Caco-2 (cell line): ENCODE measurements at regions of chr14 and their contacts with region 1.

Region 1: DNA sequence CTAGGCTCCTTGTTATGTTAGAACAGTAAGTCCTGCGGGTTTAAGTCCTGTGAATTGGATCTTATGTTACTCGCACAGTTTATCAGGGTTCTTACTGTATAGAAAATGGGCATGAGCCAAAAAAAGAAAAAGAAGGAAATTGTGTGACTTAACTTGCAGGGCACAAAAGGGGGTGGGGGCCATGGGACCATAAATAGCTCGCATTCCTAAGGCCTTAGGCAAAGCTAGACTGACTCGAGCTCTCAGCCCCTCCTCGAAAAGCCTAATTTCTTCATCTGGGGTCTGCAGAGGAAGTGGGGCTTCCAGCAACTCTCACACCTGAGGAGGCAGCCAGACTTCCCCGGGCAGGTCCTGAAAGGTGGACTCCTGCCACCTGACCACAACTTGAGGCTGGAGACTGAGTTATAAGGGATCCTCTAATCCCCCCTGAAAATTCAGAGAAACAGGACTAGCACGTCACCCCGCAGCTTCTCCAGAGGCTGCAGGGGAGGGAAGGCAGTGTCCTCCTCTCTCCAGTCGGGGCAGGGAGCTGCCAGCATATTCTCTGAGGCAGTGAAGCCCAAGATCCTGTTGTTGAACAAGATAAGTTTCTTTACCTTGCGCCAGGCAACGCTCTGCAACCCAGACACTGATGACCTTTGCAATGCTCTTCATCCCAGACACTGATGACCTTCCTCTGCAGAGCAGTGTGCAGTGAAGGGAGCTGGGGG is 280.5 kb downstream of the PCNX1 start:
- DNase-seq: peak; percentile 72 to 82
- H3K4me3 ChIP-seq: no peak overlapping the region
- H3K4me3 Mint-ChIP-seq: peak overlapping the region; percentile 48
- H3K27ac Mint-ChIP-seq: peak overlapping the region; percentile 95
- H3K4me1 ChIP-seq: peaks cover 31% of the 10 kb centered on the region
- H3K4me1 Mint-ChIP-seq: peaks cover 22% of the 10 kb centered on the region
- H3K27me3 ChIP-seq: no peaks in the 10 kb centered on the region
- H3K27me3 Mint-ChIP-seq: no peaks in the 10 kb centered on the region
- CTCF ChIP-seq: no peak

Region 2: GRCh38 chr14:71175450-71175849 is 12.4 kb before region 1 on chr14:
- CTCF ChIA-PET with region 1: no interaction called
- POLR2A ChIA-PET with region 1: no interaction called
- intact Hi-C with region 1: loop called (anchors 1 kb)
- DNase-seq: peak; percentile 32 to 51
- H3K4me3 ChIP-seq: no peak overlapping the region
- H3K4me3 Mint-ChIP-seq: no peak overlapping the region
- H3K27ac Mint-ChIP-seq: no peak overlapping the region
- H3K4me1 ChIP-seq: no peaks in the 10 kb centered on the region
- H3K4me1 Mint-ChIP-seq: peaks cover 7% of the 10 kb centered on the region
- H3K27me3 ChIP-seq: no peaks in the 10 kb centered on the region
- H3K27me3 Mint-ChIP-seq: no peaks in the 10 kb centered on the region
- CTCF ChIP-seq: no peak

Region 3: DNA sequence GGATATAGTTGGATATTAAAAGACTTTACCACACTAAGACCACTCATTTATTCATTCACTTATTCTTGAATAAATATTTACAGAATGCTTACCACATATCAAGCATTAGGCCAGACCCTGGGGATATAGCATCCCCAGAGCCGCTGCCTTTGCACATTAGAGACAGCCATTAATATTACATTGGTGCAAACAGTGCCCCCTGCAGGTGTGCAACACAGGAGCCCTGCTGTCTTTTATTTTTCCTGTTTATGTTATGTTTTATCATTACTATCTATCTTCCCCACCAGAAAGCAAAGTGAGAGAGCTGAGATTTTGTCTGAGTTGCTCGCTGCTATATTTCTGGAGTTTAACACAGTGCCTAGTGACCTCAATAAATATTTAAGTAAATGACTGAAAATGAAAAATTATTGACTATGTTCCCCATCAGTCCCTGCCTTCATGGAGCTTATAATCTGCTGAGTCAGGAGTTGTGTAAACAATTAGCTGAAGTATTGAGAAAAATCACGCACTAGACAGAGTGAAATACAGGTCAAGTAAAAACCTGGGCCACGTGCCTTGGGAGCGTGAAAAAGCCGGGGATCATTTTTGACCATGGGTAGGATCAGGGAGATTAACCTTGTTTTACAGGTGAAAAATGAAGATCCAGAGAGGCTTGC is 21.0 kb after region 1 on chr14:
- CTCF ChIA-PET with region 1: no interaction called
- POLR2A ChIA-PET with region 1: interaction called, 3 read pairs
- intact Hi-C with region 1: loop called (anchors 2 kb)
- DNase-seq: no peak
- H3K4me3 ChIP-seq: no peak overlapping the region
- H3K4me3 Mint-ChIP-seq: no peak overlapping the region
- H3K27ac Mint-ChIP-seq: no peak overlapping the region
- H3K4me1 ChIP-seq: no peaks in the 10 kb centered on the region
- H3K4me1 Mint-ChIP-seq: peaks cover 8% of the 10 kb centered on the region
- H3K27me3 ChIP-seq: no peaks in the 10 kb centered on the region
- H3K27me3 Mint-ChIP-seq: no peaks in the 10 kb centered on the region
- CTCF ChIP-seq: peak in 1 of 2 experiments; percentile 15

Region 4: GRCh38 chr14:71380271-71380670 is 192.5 kb after region 1 on chr14:
- CTCF ChIA-PET with region 1: no interaction called
- POLR2A ChIA-PET with region 1: interaction called, 13 read pairs
- intact Hi-C with region 1: no loop called
- DNase-seq: peak; percentile 36 to 41
- H3K4me3 ChIP-seq: no peak overlapping the region
- H3K4me3 Mint-ChIP-seq: no peak overlapping the region
- H3K27ac Mint-ChIP-seq: peak overlapping the region; percentile 10
- H3K4me1 ChIP-seq: peaks cover 50% of the 10 kb centered on the region
- H3K4me1 Mint-ChIP-seq: peaks cover 52% of the 10 kb centered on the region
- H3K27me3 ChIP-seq: no peaks in the 10 kb centered on the region
- H3K27me3 Mint-ChIP-seq: no peaks in the 10 kb centered on the region
- CTCF ChIP-seq: no peak